Caco-2 (cell line): ENCODE measurements at regions of chr2 and their contacts with region 1.

Region 1: DNA sequence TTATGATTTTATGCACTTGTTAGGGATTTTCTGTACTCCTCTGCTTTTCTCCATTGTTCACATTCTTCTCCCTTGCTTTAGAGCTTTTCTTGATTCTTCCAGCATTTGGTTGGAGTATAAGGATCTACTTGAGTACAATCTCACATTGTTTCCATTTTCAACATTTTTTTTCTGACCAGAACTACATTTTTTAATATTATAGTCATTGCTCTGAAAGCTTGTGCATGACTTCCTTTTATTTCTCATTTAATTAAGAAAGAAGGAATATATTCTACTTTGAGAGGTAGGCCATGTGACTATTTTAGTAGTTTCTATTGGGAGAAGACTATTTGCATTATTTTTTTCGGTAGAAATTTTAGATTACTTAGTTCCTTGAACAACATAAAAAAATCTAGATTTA is 200.4 kb downstream of the TMEM247 start:
- DNase-seq: no peak
- H3K4me3 ChIP-seq: no peak overlapping the region
- H3K4me3 Mint-ChIP-seq: no peak overlapping the region
- H3K27ac Mint-ChIP-seq: no peak overlapping the region
- H3K4me1 ChIP-seq: no peaks in the 10 kb centered on the region
- H3K4me1 Mint-ChIP-seq: peaks cover 7% of the 10 kb centered on the region
- H3K27me3 ChIP-seq: no peaks in the 10 kb centered on the region
- H3K27me3 Mint-ChIP-seq: peaks cover 4% of the 10 kb centered on the region
- CTCF ChIP-seq: no peak

Region 2: DNA sequence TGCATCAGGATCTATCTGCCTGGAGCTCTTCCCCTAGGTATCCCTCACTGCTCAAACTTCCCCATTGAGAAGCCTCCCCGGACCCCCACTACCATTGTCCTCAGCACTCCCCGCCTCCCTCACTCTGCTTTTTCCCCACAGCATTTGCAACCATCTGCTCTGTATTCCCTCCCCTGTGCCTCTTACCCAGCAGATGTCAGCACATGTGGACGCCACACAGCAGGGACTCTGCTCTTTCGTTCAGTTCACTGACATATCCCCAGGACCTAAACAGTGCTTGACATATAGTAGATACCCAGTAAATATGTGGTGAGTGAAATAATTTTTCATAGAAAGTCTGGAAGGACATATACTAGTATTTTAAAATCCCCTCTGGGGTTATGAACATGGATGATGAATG is 99.3 kb before region 1 on chr2:
- CTCF ChIA-PET with region 1: no interaction called
- POLR2A ChIA-PET with region 1: no interaction called
- intact Hi-C with region 1: no loop called
- DNase-seq: no peak
- H3K4me3 ChIP-seq: no peak overlapping the region
- H3K4me3 Mint-ChIP-seq: no peak overlapping the region
- H3K27ac Mint-ChIP-seq: peak overlapping the region; percentile 7
- H3K4me1 ChIP-seq: peaks cover 8% of the 10 kb centered on the region
- H3K4me1 Mint-ChIP-seq: peaks cover under 1% of the 10 kb centered on the region
- H3K27me3 ChIP-seq: no peaks in the 10 kb centered on the region
- H3K27me3 Mint-ChIP-seq: no peaks in the 10 kb centered on the region
- CTCF ChIP-seq: no peak

Region 3: DNA sequence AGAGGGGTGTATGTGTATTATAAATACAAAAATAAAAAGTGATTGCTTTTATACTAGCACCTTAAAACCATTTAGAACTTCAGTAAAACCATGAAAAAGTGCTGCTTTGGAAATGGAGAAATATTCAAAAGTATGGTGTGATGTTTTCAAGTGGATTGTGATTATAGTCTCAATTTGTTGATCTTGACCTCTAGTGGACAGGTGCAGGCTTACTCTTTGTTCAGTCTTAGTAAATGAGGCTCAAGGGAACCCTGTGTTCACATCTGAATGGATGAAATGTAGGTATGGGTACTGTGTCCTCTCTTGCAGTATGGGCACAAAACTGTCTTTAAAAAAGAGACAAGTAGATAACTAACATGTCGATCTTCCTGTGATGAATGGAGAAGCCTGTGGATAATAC is 90.0 kb after region 1 on chr2:
- CTCF ChIA-PET with region 1: no interaction called
- POLR2A ChIA-PET with region 1: no interaction called
- intact Hi-C with region 1: no loop called
- DNase-seq: no peak
- H3K4me3 ChIP-seq: no peak overlapping the region
- H3K4me3 Mint-ChIP-seq: peak overlapping the region; percentile 75
- H3K27ac Mint-ChIP-seq: peak overlapping the region; percentile 53
- H3K4me1 ChIP-seq: peaks cover 4% of the 10 kb centered on the region; the same call in 1 of the 2 replicates
- H3K4me1 Mint-ChIP-seq: peaks cover 15% of the 10 kb centered on the region
- H3K27me3 ChIP-seq: no peaks in the 10 kb centered on the region
- H3K27me3 Mint-ChIP-seq: no peaks in the 10 kb centered on the region
- CTCF ChIP-seq: peak in 1 of 2 experiments; percentile 37

Region 4: GRCh38 chr2:46812361-46813024 is 132.7 kb after region 1 on chr2:
- CTCF ChIA-PET with region 1: no interaction called
- POLR2A ChIA-PET with region 1: no interaction called
- intact Hi-C with region 1: no loop called
- DNase-seq: no peak
- H3K4me3 ChIP-seq: no peak overlapping the region
- H3K4me3 Mint-ChIP-seq: peak overlapping the region; percentile 13
- H3K27ac Mint-ChIP-seq: no peak overlapping the region
- H3K4me1 ChIP-seq: peaks cover 13% of the 10 kb centered on the region
- H3K4me1 Mint-ChIP-seq: peaks cover 11% of the 10 kb centered on the region
- H3K27me3 ChIP-seq: no peaks in the 10 kb centered on the region
- H3K27me3 Mint-ChIP-seq: peaks cover 7% of the 10 kb centered on the region
- CTCF ChIP-seq: no peak

Region 5: GRCh38 chr2:46974659-46975058 is 294.9 kb after region 1 on chr2:
- CTCF ChIA-PET with region 1: no interaction called
- POLR2A ChIA-PET with region 1: interaction called, 13 read pairs
- intact Hi-C with region 1: no loop called
- DNase-seq: no peak
- H3K4me3 ChIP-seq: no peak overlapping the region
- H3K4me3 Mint-ChIP-seq: no peak overlapping the region
- H3K27ac Mint-ChIP-seq: peak overlapping the region; percentile 38
- H3K4me1 ChIP-seq: peaks cover 6% of the 10 kb centered on the region; the same call in 1 of the 2 replicates
- H3K4me1 Mint-ChIP-seq: no peaks in the 10 kb centered on the region
- H3K27me3 ChIP-seq: no peaks in the 10 kb centered on the region
- H3K27me3 Mint-ChIP-seq: no peaks in the 10 kb centered on the region
- CTCF ChIP-seq: no peak